IMR-90 (cell line): ENCODE measurements at regions of chr5 and their contacts with region 1.

Region 1: GRCh38 chr5:115432691-115433090 is 111.9 kb downstream of the FEM1C start:
- DNase-seq: peak; percentile 61
- ATAC-seq: peak; percentile 63
- H3K4me3 ChIP-seq: no peak overlapping the region
- H3K27ac ChIP-seq: no peak overlapping the region
- H3K4me1 ChIP-seq: 0 out of 2 replicates have a peak, but pooled peaks cover 2% of the 10 kb centered on the region
- H3K27me3 ChIP-seq: no peaks in the 10 kb centered on the region; the same call in 1 of the 2 replicates
- CTCF ChIP-seq: no peak
- POLR2A ChIP-seq: no peak
- RAD21 ChIP-seq: no peak

Region 2: GRCh38 chr5:114830114-114830513 is 602.6 kb before region 1 on chr5:
- CTCF ChIA-PET with region 1: no interaction called
- POLR2A ChIA-PET with region 1: no interaction called
- dilution Hi-C with region 1: no loop called
- in situ Hi-C with region 1: no loop called
- intact Hi-C with region 1: no loop called
- DNase-seq: no peak
- ATAC-seq: no peak
- H3K4me3 ChIP-seq: no peak overlapping the region
- H3K27ac ChIP-seq: no peak overlapping the region
- H3K4me1 ChIP-seq: no peaks in the 10 kb centered on the region
- H3K27me3 ChIP-seq: no peaks in the 10 kb centered on the region
- CTCF ChIP-seq: no peak
- POLR2A ChIP-seq: no peak
- RAD21 ChIP-seq: no peak

Region 3: DNA sequence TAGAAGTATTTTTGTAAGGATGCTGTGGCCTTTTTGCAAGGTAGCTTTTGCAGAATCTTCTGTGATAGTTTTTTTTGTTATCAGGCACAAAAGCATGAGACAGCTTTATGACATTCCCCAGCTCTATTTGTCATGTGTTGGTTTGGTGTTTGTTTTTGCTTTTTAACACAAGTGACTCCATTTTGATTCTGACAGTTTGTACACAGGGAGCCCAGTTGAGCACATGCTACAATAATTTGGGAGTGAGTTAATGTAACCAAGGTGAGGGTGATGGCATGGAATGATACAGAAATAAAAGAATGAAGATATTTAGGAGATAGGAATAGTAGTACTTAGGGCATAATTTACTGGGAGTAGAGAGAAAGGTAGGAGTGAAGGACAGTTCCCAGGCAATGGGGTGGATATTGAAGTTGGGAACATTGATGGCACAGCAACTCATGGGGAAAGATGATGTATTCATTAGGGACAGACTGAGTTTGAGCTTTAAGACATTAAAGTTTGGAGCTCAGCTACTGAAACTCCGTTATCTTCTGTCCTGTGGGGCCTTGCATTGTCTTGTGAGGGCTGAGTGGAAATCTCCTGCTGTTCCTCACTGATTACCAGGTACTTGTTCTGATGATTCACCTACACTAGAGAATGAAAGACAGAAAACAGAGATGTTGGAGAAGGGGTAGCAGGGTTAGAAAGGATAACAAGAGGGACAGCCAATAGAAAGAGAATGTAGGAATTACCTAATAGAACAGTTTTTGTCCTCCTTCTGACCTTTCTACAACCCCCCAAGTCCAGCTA is 47.9 kb before region 1 on chr5:
- CTCF ChIA-PET with region 1: no interaction called
- POLR2A ChIA-PET with region 1: no interaction called
- dilution Hi-C with region 1: no loop called
- in situ Hi-C with region 1: no loop called
- intact Hi-C with region 1: loop called (anchors 2 kb)
- DNase-seq: no peak
- ATAC-seq: no peak
- H3K4me3 ChIP-seq: no peak overlapping the region
- H3K27ac ChIP-seq: no peak overlapping the region
- H3K4me1 ChIP-seq: peaks cover 5% of the 10 kb centered on the region; the same call in 1 of the 2 replicates
- H3K27me3 ChIP-seq: no peaks in the 10 kb centered on the region
- CTCF ChIP-seq: no peak
- POLR2A ChIP-seq: no peak
- RAD21 ChIP-seq: no peak

Region 4: DNA sequence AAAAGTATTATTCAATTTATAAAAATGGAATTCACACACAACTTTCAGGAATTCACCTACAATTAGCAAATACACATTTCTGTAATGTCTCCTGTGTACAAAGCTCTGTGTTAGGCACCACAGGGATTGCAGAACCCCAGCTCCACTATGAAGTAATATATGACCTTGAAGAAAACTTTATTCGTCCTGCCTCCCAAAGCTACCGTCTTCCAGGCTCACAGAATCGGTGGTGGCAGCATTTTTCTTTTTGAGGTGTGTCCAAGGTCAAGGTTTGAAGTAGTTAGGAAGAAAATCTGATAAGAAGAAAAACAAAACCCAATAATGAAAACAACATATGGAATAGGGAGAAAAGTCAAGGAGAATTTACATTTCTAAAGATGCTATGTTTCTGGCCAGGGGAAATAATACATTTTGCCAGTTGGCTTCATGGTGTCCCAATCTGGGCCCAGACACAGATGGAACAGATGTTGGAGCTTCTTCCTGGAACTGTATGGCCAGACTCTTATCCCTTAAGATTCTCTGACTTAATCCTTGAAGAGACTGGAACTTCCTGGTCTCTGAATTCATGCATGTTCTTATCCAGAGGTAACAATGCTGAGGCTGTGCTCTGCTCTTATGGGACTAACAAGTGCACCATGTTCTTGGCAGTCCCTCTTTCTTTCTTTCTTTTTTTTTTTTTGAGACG is 507.6 kb after region 1 on chr5:
- CTCF ChIA-PET with region 1: no interaction called
- POLR2A ChIA-PET with region 1: no interaction called
- dilution Hi-C with region 1: no loop called
- in situ Hi-C with region 1: no loop called
- intact Hi-C with region 1: no loop called
- DNase-seq: no peak
- ATAC-seq: no peak
- H3K4me3 ChIP-seq: no peak overlapping the region
- H3K27ac ChIP-seq: no peak overlapping the region
- H3K4me1 ChIP-seq: no peaks in the 10 kb centered on the region
- H3K27me3 ChIP-seq: no peaks in the 10 kb centered on the region
- CTCF ChIP-seq: no peak
- POLR2A ChIP-seq: no peak
- RAD21 ChIP-seq: no peak